Naive thymus-derived CD4-positive, alpha-beta T cell (primary cell): ENCODE measurements at regions of chr14 and their contacts with region 1.

Region 1: DNA sequence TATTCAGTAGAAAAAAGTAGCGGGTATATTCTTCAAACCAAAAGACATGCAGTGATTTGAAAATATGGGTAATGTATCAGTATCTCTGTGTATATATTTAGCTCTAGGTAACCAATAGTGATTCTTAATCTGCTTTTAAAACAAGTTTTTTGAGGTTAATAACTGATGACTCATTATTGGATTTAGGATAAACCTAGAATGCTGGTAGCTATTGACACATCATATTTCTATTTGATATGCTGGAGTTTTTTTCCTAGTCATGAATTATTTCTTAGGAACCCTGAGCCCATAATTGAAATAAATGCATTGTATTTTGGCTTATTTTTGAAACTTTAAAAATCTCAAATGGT is 15.5 kb downstream of the ARF6 start:
- DNase-seq: no peak
- ATAC-seq: no peak
- H3K4me3 ChIP-seq: no peak overlapping the region
- H3K4me3 Mint-ChIP-seq: peak overlapping the region in 1 of 10 donors; percentile 30
- H3K27ac ChIP-seq: no peak overlapping the region
- H3K27ac Mint-ChIP-seq: peak overlapping the region in 1 of 9 donors; percentile 46
- H3K4me1 ChIP-seq: peaks cover 0 to 14% of the 10 kb centered on the region in 2 donors
- H3K4me1 Mint-ChIP-seq: peaks cover 8 to 44% (median 24%) of the 10 kb centered on the region in 7 donors
- H3K27me3 ChIP-seq: no peaks in the 10 kb centered on the region
- H3K27me3 Mint-ChIP-seq: no peaks in the 10 kb centered on the region

Region 2: GRCh38 chr14:49828640-49829039 is 79.8 kb before region 1 on chr14:
- CTCF ChIA-PET with region 1: no interaction called
- POLR2A ChIA-PET with region 1: interaction called, 11 read pairs
- intact Hi-C with region 1: no loop called
- DNase-seq: no peak
- ATAC-seq: no peak
- H3K4me3 ChIP-seq: no peak overlapping the region
- H3K4me3 Mint-ChIP-seq: no peak overlapping the region
- H3K27ac ChIP-seq: no peak overlapping the region
- H3K27ac Mint-ChIP-seq: peak overlapping the region in 1 of 9 donors; percentile 65
- H3K4me1 ChIP-seq: no peaks in the 10 kb centered on the region
- H3K4me1 Mint-ChIP-seq: peaks cover 0 to 24% (median 10%) of the 10 kb centered on the region in 7 donors
- H3K27me3 ChIP-seq: no peaks in the 10 kb centered on the region
- H3K27me3 Mint-ChIP-seq: no peaks in the 10 kb centered on the region

Region 3: DNA sequence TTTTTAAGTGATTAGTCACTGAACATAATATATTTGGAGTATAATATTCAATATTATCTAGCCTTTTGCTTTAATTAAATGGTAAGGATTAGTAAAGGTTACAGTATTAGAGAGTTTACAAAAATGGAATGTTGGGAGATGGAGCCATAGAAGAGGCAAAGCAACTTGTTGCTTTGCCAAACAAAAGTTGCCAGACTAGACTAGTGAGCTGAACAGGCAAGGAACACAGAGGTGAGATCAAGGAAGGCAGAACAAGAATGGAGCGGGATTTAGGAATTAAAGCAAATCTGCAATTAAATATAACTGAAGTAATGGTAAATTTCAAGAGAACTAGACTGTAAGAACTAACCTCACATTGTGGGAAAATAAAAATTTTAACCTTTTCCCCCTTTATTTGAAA is 10.4 kb before region 1 on chr14:
- CTCF ChIA-PET with region 1: interaction called, 5 read pairs
- POLR2A ChIA-PET with region 1: interaction called, 11 read pairs
- intact Hi-C with region 1: loop called in 1 of 2 experiments (anchors 1 kb)
- DNase-seq: no peak
- ATAC-seq: no peak
- H3K4me3 ChIP-seq: peak overlapping the region; percentile 32
- H3K4me3 Mint-ChIP-seq: peak overlapping the region; percentile 53 to 95 (median 64)
- H3K27ac ChIP-seq: peak overlapping the region; percentile 63
- H3K27ac Mint-ChIP-seq: peak overlapping the region; percentile 37 to 99 (median 87)
- H3K4me1 ChIP-seq: peaks cover 14 to 16% of the 10 kb centered on the region in 2 donors
- H3K4me1 Mint-ChIP-seq: peaks cover 30 to 59% (median 50%) of the 10 kb centered on the region in 7 donors
- H3K27me3 ChIP-seq: no peaks in the 10 kb centered on the region
- H3K27me3 Mint-ChIP-seq: no peaks in the 10 kb centered on the region

Region 4: DNA sequence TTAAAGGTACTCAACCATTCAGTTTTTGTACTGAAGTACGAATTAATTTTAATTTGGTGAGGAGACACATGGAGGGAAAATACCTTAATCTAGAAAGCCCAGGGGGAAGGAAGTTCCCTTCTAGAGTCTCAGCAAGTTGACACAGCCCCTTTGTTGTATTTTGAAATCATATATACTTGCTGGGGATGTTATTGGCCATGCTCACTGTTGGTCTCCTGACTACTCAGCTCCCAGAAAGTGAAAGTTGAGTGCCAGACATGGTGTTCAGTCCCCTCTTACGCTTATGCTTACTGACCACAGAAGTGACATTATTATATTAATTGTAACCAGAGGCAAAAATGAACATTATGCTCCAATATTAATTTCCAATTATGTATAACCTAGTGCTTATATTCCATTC is 12.5 kb after region 1 on chr14:
- CTCF ChIA-PET with region 1: no interaction called
- POLR2A ChIA-PET with region 1: no interaction called
- intact Hi-C with region 1: loop called in 1 of 2 experiments (anchors 1 kb)
- DNase-seq: no peak
- ATAC-seq: peak; percentile 41
- H3K4me3 ChIP-seq: no peak overlapping the region
- H3K4me3 Mint-ChIP-seq: no peak overlapping the region
- H3K27ac ChIP-seq: no peak overlapping the region
- H3K27ac Mint-ChIP-seq: no peak overlapping the region
- H3K4me1 ChIP-seq: no peaks in the 10 kb centered on the region
- H3K4me1 Mint-ChIP-seq: peaks cover 0 to 20% (median 16%) of the 10 kb centered on the region in 7 donors
- H3K27me3 ChIP-seq: no peaks in the 10 kb centered on the region
- H3K27me3 Mint-ChIP-seq: no peaks in the 10 kb centered on the region

Region 5: GRCh38 chr14:50260511-50260910 is 352.1 kb after region 1 on chr14:
- CTCF ChIA-PET with region 1: no interaction called
- POLR2A ChIA-PET with region 1: no interaction called
- intact Hi-C with region 1: no loop called
- DNase-seq: peak in 7 of 9 donors; percentile 10 to 46 (median 26)
- ATAC-seq: peak; percentile 67
- H3K4me3 ChIP-seq: no peak overlapping the region
- H3K4me3 Mint-ChIP-seq: no peak overlapping the region
- H3K27ac ChIP-seq: no peak overlapping the region
- H3K27ac Mint-ChIP-seq: peak overlapping the region in 3 of 9 donors; percentile 4 to 16 (median 8)
- H3K4me1 ChIP-seq: no peaks in the 10 kb centered on the region
- H3K4me1 Mint-ChIP-seq: peaks cover 0 to 8% (median 0%) of the 10 kb centered on the region in 7 donors
- H3K27me3 ChIP-seq: no peaks in the 10 kb centered on the region
- H3K27me3 Mint-ChIP-seq: no peaks in the 10 kb centered on the region